Lower lobe of right lung (tissue), 2 donors: ENCODE measurements at regions of chr5 and their contacts with region 1.

Region 1: DNA sequence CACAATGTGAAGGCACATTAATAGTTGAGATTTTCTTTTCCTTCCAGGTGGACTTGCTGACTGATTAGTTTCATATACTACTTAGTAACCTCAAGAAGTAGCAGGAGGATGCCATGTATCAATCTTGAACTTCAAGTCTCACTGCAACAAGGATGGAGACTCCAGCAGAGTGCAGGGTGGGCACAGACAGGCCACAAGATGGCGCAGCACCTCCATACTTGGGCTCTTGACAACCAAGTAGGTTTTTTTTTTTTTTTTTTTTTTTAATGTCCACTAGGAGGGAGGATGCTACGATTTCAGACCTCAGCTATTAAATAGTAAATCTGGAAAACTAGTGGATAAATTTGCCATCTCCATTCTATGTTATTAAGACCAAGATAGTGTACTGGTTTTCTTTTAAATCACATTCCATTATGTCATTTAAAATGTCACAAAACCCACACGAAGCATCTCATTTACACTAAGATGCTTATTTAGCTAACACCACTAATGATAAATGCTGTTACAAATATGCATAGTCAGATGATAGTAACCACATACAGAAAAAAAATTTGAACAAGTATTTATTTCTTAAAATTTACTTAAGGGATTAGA is 58.6 kb downstream of the IL6ST start:
- DNase-seq: peak; percentile 83
- ATAC-seq: peak; percentile 41 to 71
- H3K4me3 ChIP-seq: no peak overlapping the region
- H3K27ac ChIP-seq: no peak overlapping the region
- H3K4me1 ChIP-seq: peaks cover 25% of the 10 kb centered on the region
- H3K27me3 ChIP-seq: no peaks in the 10 kb centered on the region
- CTCF ChIP-seq: peak; percentile 88

Region 2: DNA sequence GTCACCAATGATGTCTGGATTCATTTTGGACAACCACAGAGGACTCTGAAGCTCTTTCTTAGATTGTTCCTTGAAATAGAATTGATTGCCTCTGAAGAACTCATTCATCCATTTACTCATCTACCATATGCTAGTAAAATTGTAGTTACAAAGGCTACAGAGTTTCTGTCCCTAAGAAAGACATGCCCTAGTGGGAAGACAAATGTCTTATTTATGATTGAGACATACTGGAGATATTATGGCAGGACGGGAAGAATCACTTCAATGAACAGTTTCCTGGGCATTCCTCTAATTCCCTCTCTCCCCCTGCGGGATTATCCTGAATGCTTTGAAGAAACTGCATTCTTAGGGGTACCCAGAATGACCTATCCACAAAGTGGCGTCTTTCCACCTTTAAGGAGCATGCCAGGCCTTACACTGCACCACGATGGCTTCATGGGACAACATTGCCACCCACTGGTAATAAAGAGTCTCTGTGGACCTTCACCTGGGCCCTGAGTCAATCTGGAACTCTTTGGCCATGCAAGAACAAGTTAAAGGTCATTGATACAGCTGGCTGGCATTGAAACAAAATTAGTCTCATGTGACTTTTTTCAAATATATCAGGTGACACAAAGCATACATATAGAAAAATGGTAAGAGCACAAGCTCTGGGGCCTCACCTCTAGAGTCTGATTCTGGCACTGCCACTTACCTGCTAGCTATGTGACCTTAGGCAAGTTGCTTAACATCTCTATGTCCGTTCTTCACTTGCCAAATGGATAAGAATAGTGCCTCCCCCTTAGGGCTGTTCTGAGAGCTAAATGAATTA is 264.9 kb after region 1 on chr5:
- intact Hi-C with region 1: loop called (anchors 10 kb)
- DNase-seq: peak; percentile 53
- ATAC-seq: peak; percentile 97 to 99
- H3K4me3 ChIP-seq: no peak overlapping the region
- H3K27ac ChIP-seq: no peak overlapping the region
- H3K4me1 ChIP-seq: no peaks in the 10 kb centered on the region
- H3K27me3 ChIP-seq: no peaks in the 10 kb centered on the region
- CTCF ChIP-seq: peak; percentile 81